ENCODE measurements at regions of chrX and their contacts with region 1.

Region 1: GRCh38 chrX:130079824-130080406 is 30.4 kb downstream of the ELF4 start:
- DNase-seq: no peak
- H3K4me3 ChIP-seq: no peak overlapping the region
- H3K27ac ChIP-seq: peak overlapping the region in 1 of 4 donors; percentile 17
- H3K4me1 ChIP-seq: peaks cover 0 to 46% (median 5%) of the 10 kb centered on the region in 3 donors
- H3K27me3 ChIP-seq: no peaks in the 10 kb centered on the region
- CTCF ChIP-seq: peak; percentile 53 to 70 (median 66)
- POLR2A ChIP-seq: no peak

Region 2: DNA sequence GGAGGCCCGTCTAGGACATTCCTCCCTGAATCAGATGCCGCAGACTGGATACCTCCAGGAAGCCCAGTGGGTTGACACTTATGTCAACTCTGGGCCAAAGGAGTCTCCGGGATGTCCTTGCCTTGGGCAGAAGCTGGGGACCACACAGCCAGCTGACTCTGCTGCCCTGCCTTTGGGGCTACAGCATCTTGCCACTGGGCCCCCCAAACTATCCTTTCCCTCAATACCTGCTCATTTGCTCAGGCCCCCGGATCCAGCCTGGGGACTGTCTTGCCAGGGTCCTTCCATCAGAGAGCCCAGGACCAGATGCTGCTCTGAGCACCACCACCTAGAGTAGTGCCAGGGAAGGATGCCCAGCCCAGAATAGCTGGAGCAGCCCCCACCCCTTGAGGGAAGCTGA is 110.9 kb after region 1 on chrX:
- intact Hi-C with region 1: loop called (anchors 5 kb)
- DNase-seq: no peak
- H3K4me3 ChIP-seq: no peak overlapping the region
- H3K27ac ChIP-seq: no peak overlapping the region
- H3K4me1 ChIP-seq: peaks cover 0 to 3% (median 0%) of the 10 kb centered on the region in 3 donors
- H3K27me3 ChIP-seq: no peaks in the 10 kb centered on the region
- CTCF ChIP-seq: no peak
- POLR2A ChIP-seq: no peak

Measured in esophagus squamous epithelium (tissue), 5 donors.